Activated CD4-positive, alpha-beta memory T cell treated with anti-CD3 and anti-CD28 coated beads, Interleukin-2, amount 10 ng/mL, durations not matched to agents 7 days and 5 days (primary cell): ENCODE measurements at regions of chr3 and their contacts with region 1.

Region 1: DNA sequence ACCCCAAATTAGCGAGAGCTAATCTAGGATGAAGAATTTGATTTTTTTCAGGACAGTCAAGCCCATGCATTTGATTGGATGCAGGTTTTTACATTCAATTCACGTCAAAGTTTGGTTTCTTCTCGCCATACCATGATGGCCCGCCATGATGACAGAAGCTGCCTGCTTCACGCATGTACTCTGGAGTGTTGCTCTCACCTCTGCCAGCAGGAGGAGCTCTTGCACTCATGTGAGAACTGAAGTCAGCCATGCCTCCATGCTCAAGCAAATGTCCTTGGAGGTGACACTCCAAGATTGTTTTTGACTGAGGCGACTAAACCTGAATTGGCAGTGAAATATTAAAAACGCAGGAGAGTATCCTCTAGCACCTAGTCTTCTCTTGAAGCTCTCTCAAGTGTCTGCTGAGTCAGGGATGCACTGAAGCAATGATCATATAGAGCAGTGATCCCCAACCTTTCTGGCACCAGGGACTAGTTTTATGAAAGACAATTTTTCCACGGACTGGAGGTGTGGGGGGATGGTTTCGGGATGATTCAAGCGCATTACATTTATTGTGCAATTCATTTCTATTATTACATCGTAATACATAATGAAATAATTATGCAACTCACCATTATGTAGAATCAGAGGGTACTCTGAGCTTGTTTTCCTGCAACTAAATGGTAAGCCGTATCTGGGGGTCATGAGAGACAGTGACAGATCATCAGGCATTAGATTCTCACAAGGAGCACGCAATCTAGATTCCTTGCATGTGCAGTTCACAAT is 121.0 kb downstream of the SAMMSON start:
- DNase-seq: peak; percentile 61
- H3K4me3 Mint-ChIP-seq: no peak overlapping the region
- H3K27ac Mint-ChIP-seq: no peak overlapping the region
- H3K4me1 Mint-ChIP-seq: no peaks in the 10 kb centered on the region
- H3K27me3 Mint-ChIP-seq: peaks cover 4% of the 10 kb centered on the region

Region 2: DNA sequence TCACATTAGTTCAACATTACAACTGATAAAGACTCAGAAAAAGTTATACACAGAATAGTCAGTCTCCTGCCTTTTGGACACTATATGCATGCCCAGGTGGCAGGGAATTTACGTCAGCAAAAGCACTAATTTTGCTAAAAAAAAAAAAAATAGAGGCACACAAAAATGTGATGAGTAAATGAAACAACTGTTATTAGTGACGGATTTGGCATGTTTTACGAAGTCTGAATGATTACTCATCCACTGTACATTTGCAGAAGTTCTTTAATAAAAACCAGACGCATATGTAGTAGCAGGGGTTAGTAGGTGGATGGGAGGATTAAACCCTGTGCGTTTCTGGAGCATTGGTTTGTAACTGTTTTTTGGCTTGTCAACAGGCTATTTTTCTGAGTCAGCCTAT is 282.3 kb before region 1 on chr3:
- CTCF ChIA-PET with region 1: no interaction called
- POLR2A ChIA-PET with region 1: no interaction called
- DNase-seq: no peak
- H3K4me3 Mint-ChIP-seq: no peak overlapping the region
- H3K27ac Mint-ChIP-seq: no peak overlapping the region
- H3K4me1 Mint-ChIP-seq: no peaks in the 10 kb centered on the region
- H3K27me3 Mint-ChIP-seq: no peaks in the 10 kb centered on the region

Region 3: GRCh38 chr3:70108072-70108471 is 12.5 kb before region 1 on chr3:
- CTCF ChIA-PET with region 1: interaction called, 12 read pairs
- POLR2A ChIA-PET with region 1: no interaction called
- DNase-seq: no peak
- H3K4me3 Mint-ChIP-seq: no peak overlapping the region
- H3K27ac Mint-ChIP-seq: no peak overlapping the region
- H3K4me1 Mint-ChIP-seq: no peaks in the 10 kb centered on the region
- H3K27me3 Mint-ChIP-seq: peaks cover 2% of the 10 kb centered on the region

Region 4: GRCh38 chr3:70137366-70137765 is 16.8 kb after region 1 on chr3:
- CTCF ChIA-PET with region 1: interaction called, 11 read pairs
- POLR2A ChIA-PET with region 1: no interaction called
- DNase-seq: no peak
- H3K4me3 Mint-ChIP-seq: no peak overlapping the region
- H3K27ac Mint-ChIP-seq: no peak overlapping the region
- H3K4me1 Mint-ChIP-seq: no peaks in the 10 kb centered on the region
- H3K27me3 Mint-ChIP-seq: no peaks in the 10 kb centered on the region

Region 5: DNA sequence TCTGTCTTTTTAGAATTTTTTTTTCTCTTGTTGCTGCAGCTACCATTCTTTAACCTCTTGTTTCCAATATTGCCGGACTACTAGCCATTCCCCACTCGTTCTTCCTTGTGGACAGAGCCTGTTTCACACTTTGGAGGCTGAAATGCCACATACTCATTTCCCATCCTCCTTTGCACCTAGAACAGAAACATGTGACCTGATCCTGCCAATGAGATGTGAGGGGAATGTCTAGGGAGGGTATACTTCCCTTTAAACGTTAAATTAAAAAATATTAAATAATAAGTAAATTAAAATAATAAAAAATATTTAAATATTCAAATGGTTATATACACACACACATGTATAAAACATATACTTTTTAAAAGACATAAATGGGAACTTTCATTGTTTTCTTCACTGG is 212.5 kb after region 1 on chr3:
- CTCF ChIA-PET with region 1: no interaction called
- POLR2A ChIA-PET with region 1: no interaction called
- DNase-seq: no peak
- H3K4me3 Mint-ChIP-seq: no peak overlapping the region
- H3K27ac Mint-ChIP-seq: no peak overlapping the region
- H3K4me1 Mint-ChIP-seq: no peaks in the 10 kb centered on the region
- H3K27me3 Mint-ChIP-seq: no peaks in the 10 kb centered on the region